Heart right ventricle (tissue), 16 donors: ENCODE measurements at regions of chr2 and their contacts with region 1.

Region 1: DNA sequence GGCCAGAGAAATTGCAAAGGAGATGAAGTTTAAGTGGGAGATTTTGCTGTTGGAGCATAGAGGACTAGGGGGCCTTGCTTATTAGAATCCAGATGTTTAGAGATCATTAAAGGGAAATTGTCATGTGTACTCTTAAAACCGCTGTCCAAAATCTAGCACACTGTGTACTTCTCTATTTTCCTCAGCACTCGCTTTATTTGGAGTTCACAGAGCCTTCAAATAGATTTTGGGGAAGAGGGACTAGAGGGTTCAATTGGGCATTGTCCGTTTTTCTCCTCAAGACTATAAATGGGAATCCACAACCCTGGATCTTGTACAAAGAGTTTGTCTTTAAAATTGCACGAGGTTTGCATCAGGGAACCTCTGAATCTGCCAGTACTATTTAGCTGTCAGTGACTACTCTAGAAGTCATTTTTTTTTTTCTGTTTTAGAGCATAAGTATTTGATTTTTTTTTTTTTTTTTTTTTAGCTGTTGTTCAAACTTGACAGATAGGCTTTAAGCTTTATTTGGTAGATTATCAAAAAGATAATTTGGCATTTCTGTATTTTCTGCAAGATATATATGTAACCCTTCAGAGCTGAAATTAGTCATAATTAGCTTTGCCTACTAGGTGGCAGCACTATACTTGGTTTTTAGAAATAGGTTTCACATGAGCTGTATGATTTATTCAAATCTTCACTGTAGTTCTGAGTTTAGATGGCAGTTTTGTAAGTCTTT is 14.2 kb downstream of the PMS1 start:
- DNase-seq: no peak
- ATAC-seq: peak in 5 of 8 donors; percentile 27 to 71 (median 55)
- H3K4me3 ChIP-seq: no peak overlapping the region
- H3K27ac ChIP-seq: no peak overlapping the region
- H3K4me1 ChIP-seq: peaks cover 0 to 19% (median 0%) of the 10 kb centered on the region in 9 donors
- H3K27me3 ChIP-seq: no peaks in the 10 kb centered on the region
- CTCF ChIP-seq: peak in 6 of 9 donors; percentile 36 to 55 (median 50)

Region 2: GRCh38 chr2:189762551-189763298 is 35.7 kb before region 1 on chr2 and contains the start of gene OSGEPL1:
- intact Hi-C with region 1: loop called in 1 of 10 experiments (anchors 1 kb)
- DNase-seq: peak; percentile 90 to 94
- ATAC-seq: peak; percentile 95 to 99 (median 98)
- H3K4me3 ChIP-seq: peak within 1 kb of the TSS; percentile 67 to 83 (median 78)
- H3K27ac ChIP-seq: peak within 1 kb of the TSS; percentile 30 to 92 (median 87)
- H3K4me1 ChIP-seq: peaks cover 0 to 25% (median 16%) of the 10 kb centered on the region in 9 donors
- H3K27me3 ChIP-seq: no peaks in the 10 kb centered on the region
- CTCF ChIP-seq: peak in 8 of 9 donors; percentile 11 to 72 (median 52)
- total RNA-seq, gene OSGEPL1: 5.8 to 14.1 (median 9.9) TPM

Region 3: DNA sequence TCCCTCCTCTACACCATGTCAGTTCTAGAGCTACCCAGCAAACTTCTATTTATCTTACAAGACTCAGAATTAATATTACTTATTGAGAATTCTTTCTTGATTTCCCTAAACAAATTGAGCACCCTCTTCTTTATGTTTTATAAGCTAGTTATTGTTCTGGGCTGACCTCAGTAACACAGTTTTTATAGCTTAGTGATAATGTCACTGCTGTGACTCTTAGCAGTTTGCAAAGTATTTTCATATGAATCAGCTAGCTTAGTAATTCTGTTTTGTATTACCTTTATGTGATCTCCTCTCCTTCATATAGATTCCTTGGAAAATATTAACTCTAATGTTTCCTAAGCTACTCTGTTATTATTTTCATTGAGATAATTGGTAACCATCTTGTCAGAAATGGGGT is 100.6 kb after region 1 on chr2:
- intact Hi-C with region 1: no loop called
- DNase-seq: no peak
- ATAC-seq: no peak
- H3K4me3 ChIP-seq: no peak overlapping the region
- H3K27ac ChIP-seq: no peak overlapping the region
- H3K4me1 ChIP-seq: no peaks in the 10 kb centered on the region
- H3K27me3 ChIP-seq: peaks cover 0 to 18% (median 3%) of the 10 kb centered on the region in 7 donors
- CTCF ChIP-seq: no peak

Region 4: DNA sequence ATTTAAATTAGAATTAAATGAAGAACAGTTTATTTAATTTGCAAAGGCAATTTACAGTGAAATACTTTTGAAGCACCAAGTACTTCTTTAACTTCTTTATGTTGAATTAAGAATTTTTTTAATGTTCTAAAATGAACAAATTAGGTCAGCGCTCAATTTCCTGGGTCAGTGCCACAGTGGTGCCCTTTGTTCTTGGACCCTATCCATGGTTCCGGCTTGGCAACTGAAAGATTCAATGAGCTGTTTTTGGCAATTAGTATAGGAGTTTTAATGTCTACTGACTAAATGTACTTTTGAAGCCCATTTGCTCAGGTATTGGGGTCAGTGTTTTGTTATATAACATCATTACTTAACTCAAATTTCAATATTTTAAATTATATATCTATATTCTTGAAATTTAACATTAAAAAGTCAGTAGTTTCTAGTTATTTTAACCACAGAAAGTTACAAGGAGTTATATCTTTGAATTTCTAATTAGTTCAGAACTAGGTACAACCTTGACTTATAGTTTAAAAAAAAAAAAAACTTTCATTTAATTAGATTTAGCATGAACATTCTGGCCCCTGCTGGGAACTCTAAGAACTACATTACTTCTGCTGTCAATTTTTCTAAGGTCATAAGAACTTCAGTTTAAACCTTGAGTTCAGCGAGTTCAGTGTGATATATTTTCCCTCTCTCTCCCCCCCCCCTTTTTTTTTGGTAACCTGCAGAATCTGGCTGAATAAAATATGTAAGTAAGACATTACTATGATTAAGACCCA is 271.6 kb after region 1 on chr2:
- intact Hi-C with region 1: loop called in 6 of 10 experiments (anchors 2 to 10 kb)
- DNase-seq: peak in 1 of 2 donors; percentile 21
- ATAC-seq: peak in 4 of 8 donors; percentile 48 to 64 (median 52)
- H3K4me3 ChIP-seq: no peak overlapping the region
- H3K27ac ChIP-seq: no peak overlapping the region
- H3K4me1 ChIP-seq: peaks cover 0 to 6% (median 0%) of the 10 kb centered on the region in 9 donors
- H3K27me3 ChIP-seq: no peaks in the 10 kb centered on the region
- CTCF ChIP-seq: peak in 8 of 9 donors; percentile 27 to 69 (median 62)